Caco-2 (cell line): ENCODE measurements at regions of chrX and their contacts with region 1.

Region 1: DNA sequence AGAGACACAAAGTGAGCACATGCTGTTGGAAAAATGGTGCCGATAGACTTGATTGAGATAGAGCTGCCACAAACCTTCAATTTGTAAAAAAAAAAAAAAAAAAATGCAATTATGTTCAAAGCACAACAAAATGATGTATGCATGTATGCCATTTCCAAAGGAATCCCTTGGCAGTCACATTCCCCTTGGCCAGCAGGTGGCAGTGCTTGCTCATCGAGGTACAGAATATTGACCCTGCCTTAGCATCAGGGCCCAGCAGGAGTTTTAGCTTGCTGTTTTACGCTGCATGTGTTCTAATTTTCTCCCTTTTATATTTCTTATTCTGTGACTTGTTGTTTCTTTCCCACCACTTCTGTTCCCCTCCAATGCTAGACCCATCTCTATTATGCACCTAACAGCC is 34.5 kb upstream of the CYBB start:
- DNase-seq: peak; percentile 61 to 69
- H3K4me3 ChIP-seq: no peak overlapping the region
- H3K4me3 Mint-ChIP-seq: no peak overlapping the region
- H3K27ac Mint-ChIP-seq: no peak overlapping the region
- H3K4me1 ChIP-seq: no peaks in the 10 kb centered on the region
- H3K4me1 Mint-ChIP-seq: no peaks in the 10 kb centered on the region
- H3K27me3 ChIP-seq: no peaks in the 10 kb centered on the region
- H3K27me3 Mint-ChIP-seq: peaks cover 5% of the 10 kb centered on the region
- CTCF ChIP-seq: peak; percentile 63 to 72

Region 2: GRCh38 chrX:37578045-37578444 is 167.3 kb before region 1 on chrX:
- CTCF ChIA-PET with region 1: no interaction called
- POLR2A ChIA-PET with region 1: no interaction called
- intact Hi-C with region 1: loop called (anchors 10 kb)
- DNase-seq: no peak
- H3K4me3 ChIP-seq: no peak overlapping the region
- H3K4me3 Mint-ChIP-seq: no peak overlapping the region
- H3K27ac Mint-ChIP-seq: no peak overlapping the region
- H3K4me1 ChIP-seq: no peaks in the 10 kb centered on the region
- H3K4me1 Mint-ChIP-seq: no peaks in the 10 kb centered on the region
- H3K27me3 ChIP-seq: no peaks in the 10 kb centered on the region
- H3K27me3 Mint-ChIP-seq: no peaks in the 10 kb centered on the region
- CTCF ChIP-seq: no peak

Region 3: DNA sequence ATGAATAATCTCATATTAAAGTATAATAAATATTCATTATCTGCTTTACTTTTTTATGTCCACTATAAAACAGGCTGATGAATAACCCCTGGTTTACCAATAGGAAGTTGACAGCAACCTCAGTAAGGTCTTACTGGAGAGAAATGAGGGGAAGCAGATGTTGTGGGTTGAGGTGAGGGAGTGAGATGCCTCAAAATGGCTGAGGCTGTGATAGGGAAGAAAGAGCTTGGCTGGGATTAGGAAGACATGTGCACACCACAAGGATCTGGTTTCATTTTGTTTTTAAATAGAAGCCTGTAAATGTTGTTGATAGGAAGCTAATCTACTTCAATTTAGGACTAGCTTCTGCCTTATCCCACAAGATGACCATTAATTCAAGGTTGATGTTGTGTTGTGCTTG is 20.2 kb after region 1 on chrX:
- CTCF ChIA-PET with region 1: no interaction called
- POLR2A ChIA-PET with region 1: no interaction called
- intact Hi-C with region 1: no loop called
- DNase-seq: no peak
- H3K4me3 ChIP-seq: no peak overlapping the region
- H3K4me3 Mint-ChIP-seq: no peak overlapping the region
- H3K27ac Mint-ChIP-seq: no peak overlapping the region
- H3K4me1 ChIP-seq: no peaks in the 10 kb centered on the region
- H3K4me1 Mint-ChIP-seq: no peaks in the 10 kb centered on the region
- H3K27me3 ChIP-seq: no peaks in the 10 kb centered on the region
- H3K27me3 Mint-ChIP-seq: no peaks in the 10 kb centered on the region
- CTCF ChIP-seq: no peak

Region 4: GRCh38 chrX:37905436-37906147 is 160.2 kb after region 1 on chrX:
- CTCF ChIA-PET with region 1: interaction called, 6 read pairs
- POLR2A ChIA-PET with region 1: no interaction called
- intact Hi-C with region 1: loop called (anchors 1 kb)
- DNase-seq: peak; percentile 70 to 79
- H3K4me3 ChIP-seq: peak overlapping the region; percentile 49
- H3K4me3 Mint-ChIP-seq: peak overlapping the region; percentile 82
- H3K27ac Mint-ChIP-seq: no peak overlapping the region
- H3K4me1 ChIP-seq: no peaks in the 10 kb centered on the region
- H3K4me1 Mint-ChIP-seq: no peaks in the 10 kb centered on the region
- H3K27me3 ChIP-seq: no peaks in the 10 kb centered on the region
- H3K27me3 Mint-ChIP-seq: no peaks in the 10 kb centered on the region
- CTCF ChIP-seq: peak; percentile 9 to 53